B cell (primary cell): ENCODE measurements at regions of chr9 and their contacts with region 1.

Region 1: DNA sequence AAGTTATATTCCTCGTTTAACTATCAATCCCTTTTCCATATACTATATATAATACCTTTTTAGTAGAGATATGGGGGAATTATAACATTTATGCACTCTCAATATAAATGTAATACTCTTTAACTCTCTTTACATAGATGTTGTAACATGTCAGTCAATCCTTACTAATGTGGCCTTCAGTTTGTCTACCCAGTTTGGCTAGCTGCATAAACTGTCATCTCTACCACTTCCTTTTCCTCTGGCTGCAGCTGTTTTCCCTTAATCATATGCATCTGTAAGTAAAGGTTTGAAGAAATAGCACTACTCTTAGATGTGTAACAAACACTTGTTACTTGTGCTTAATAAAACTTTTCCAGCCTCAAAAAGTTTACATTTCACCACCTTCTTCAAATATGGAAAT is 13.4 kb downstream of the ABHD17B start:
- DNase-seq: peak; percentile 48
- ATAC-seq: peak; percentile 55
- H3K4me3 ChIP-seq: peak overlapping the region in 1 of 5 experiments; percentile 29
- H3K4me3 Mint-ChIP-seq: peak overlapping the region; percentile 50
- H3K27ac ChIP-seq: peak overlapping the region; percentile 51 to 69
- H3K27ac Mint-ChIP-seq: peak overlapping the region; percentile 32
- H3K4me1 ChIP-seq: peaks cover 69 to 86% of the 10 kb centered on the region in 2 donors
- H3K4me1 Mint-ChIP-seq: peaks cover 81% of the 10 kb centered on the region
- H3K27me3 ChIP-seq: no peaks in the 10 kb centered on the region
- H3K27me3 Mint-ChIP-seq: no peaks in the 10 kb centered on the region
- CTCF ChIP-seq: no peak

Region 2: GRCh38 chr9:71793386-71794105 is 104.0 kb before region 1 on chr9:
- CTCF ChIA-PET with region 1: no interaction called
- POLR2A ChIA-PET with region 1: no interaction called
- intact Hi-C with region 1: no loop called
- DNase-seq: no peak
- ATAC-seq: no peak
- H3K4me3 ChIP-seq: no peak overlapping the region
- H3K4me3 Mint-ChIP-seq: peak overlapping the region; percentile 51
- H3K27ac ChIP-seq: peak overlapping the region; percentile 84 to 92
- H3K27ac Mint-ChIP-seq: peak overlapping the region; percentile 93
- H3K4me1 ChIP-seq: peaks cover 75 to 78% of the 10 kb centered on the region in 2 donors
- H3K4me1 Mint-ChIP-seq: peaks cover 70% of the 10 kb centered on the region
- H3K27me3 ChIP-seq: no peaks in the 10 kb centered on the region
- H3K27me3 Mint-ChIP-seq: no peaks in the 10 kb centered on the region
- CTCF ChIP-seq: no peak

Region 3: GRCh38 chr9:71863631-71864030 is 33.9 kb before region 1 on chr9:
- CTCF ChIA-PET with region 1: no interaction called
- POLR2A ChIA-PET with region 1: no interaction called
- intact Hi-C with region 1: loop called (anchors 5 kb)
- DNase-seq: no peak
- ATAC-seq: no peak
- H3K4me3 ChIP-seq: no peak overlapping the region
- H3K4me3 Mint-ChIP-seq: no peak overlapping the region
- H3K27ac ChIP-seq: no peak overlapping the region
- H3K27ac Mint-ChIP-seq: no peak overlapping the region
- H3K4me1 ChIP-seq: no peaks in the 10 kb centered on the region
- H3K4me1 Mint-ChIP-seq: peaks cover 16% of the 10 kb centered on the region
- H3K27me3 ChIP-seq: no peaks in the 10 kb centered on the region
- H3K27me3 Mint-ChIP-seq: no peaks in the 10 kb centered on the region
- CTCF ChIP-seq: no peak

Region 4: GRCh38 chr9:71886015-71886414 is 11.6 kb before region 1 on chr9:
- CTCF ChIA-PET with region 1: interaction called, 4 read pairs
- POLR2A ChIA-PET with region 1: no interaction called
- intact Hi-C with region 1: loop called (anchors 2 kb)
- DNase-seq: no peak
- ATAC-seq: no peak
- H3K4me3 ChIP-seq: no peak overlapping the region
- H3K4me3 Mint-ChIP-seq: peak overlapping the region; percentile 60
- H3K27ac ChIP-seq: peak overlapping the region; percentile 17 to 57
- H3K27ac Mint-ChIP-seq: peak overlapping the region; percentile 63
- H3K4me1 ChIP-seq: peaks cover 13 to 32% of the 10 kb centered on the region in 2 donors
- H3K4me1 Mint-ChIP-seq: peaks cover 52% of the 10 kb centered on the region
- H3K27me3 ChIP-seq: no peaks in the 10 kb centered on the region
- H3K27me3 Mint-ChIP-seq: no peaks in the 10 kb centered on the region
- CTCF ChIP-seq: no peak